Activated T-helper 1 cell treated with anti-CD3 and anti-CD28 coated beads, Interleukin-12 subunit alpha, Interleukin-12 subunit beta, Interleukin-2, Interleukin-4 antibody, amounts not matched to agents 30 ng/mL and 10 ng/mL and 1 ng/mL, durations not matched to agents 14 hours and 24 hours and 36 hours (primary cell): ENCODE measurements at regions of chr18 and their contacts with region 1.

Region 1: DNA sequence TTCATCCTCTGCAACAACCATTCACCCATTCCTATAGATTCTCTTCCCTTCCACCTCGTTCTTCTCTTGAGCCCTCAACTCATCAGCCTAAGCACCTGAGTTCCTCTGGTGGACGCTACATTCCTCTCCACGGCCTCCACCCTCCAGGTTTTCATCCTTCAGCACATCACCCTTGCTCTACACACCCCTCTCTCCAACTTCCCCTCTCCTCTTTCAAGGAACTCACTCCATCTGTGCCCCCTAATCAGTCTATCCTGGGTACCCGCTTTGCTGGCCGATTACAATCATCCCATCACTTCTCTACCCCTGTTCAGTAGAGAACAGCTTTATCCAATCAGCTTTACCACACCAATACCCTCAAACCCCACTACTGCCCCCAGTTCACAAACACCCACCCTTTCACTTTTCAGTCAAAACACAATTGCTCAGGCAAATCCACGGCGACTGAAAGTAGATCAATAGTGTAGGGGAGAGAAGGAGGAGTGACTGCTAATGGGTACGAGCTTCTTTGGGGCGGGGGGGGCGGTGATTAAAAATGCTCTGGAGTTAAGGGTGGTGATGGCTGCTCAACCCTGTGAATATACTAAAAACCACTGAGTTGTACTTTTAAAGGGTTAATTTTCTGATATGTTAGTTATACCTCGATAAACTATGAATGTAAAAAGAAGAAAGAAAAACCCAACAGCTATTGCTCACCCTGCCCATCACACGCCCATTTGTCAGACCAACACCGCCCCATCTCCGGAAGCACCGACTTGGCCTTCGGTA is 857 bp downstream of the DYM start:
- DNase-seq: no peak
- H3K4me3 Mint-ChIP-seq: peak overlapping the region; percentile 87
- H3K27ac Mint-ChIP-seq: peak overlapping the region; percentile 74
- H3K4me1 Mint-ChIP-seq: peaks cover 37% of the 10 kb centered on the region
- H3K27me3 Mint-ChIP-seq: peaks cover 5% of the 10 kb centered on the region

Region 2: DNA sequence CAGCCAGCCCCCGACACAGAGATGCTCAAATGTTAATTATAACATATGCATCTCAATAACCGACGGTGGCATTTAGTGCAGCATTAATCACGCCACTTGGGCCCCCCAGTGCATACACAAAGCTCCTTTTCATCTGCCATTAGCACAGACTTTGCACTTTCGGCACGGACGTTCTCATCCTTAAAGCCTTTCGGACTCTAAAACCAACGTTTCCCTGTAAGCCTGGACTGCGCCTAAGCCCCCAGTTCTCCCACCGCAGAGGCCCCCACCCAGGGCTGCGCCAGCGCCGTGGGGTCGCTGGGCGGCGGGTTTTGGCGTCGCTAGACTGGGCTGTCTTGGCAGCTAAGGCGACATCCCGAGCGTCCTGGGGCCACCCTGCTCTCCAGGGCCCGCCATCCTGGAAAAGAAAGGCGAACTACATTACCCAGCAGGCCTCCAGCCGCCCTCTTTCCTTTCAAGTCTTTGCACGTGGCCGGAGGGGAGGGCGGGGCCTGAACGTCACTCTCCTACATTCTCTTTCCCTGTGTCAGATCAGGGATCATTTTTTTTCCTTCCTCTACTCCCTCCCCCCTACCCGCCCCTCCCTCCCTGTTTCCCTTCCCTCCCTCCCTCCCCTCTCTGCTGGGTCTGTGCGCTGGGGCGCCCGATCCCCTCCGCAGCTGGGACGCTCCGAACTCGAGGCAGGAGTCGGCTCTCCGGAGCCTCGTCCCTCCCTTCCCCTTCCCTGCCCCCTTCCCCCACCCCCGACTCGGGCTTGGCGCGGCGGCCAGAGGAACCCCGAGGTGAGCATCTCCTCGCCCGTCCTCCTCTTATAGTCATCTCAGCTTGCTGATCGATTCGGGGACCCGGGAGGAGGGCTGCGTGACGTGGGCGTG is 920.8 kb before region 1 on chr18 and contains the start of gene CTIF:
- intact Hi-C with region 1: loop called (anchors 2 kb)
- DNase-seq: peak; percentile 60
- H3K4me3 Mint-ChIP-seq: peak within 1 kb of the TSS; percentile 90
- H3K27ac Mint-ChIP-seq: peak within 1 kb of the TSS; percentile 58
- H3K4me1 Mint-ChIP-seq: peaks cover 14% of the 10 kb centered on the region
- H3K27me3 Mint-ChIP-seq: peaks cover 30% of the 10 kb centered on the region
- total RNA-seq, gene CTIF: 7.2 and 8.5 TPM in 2 replicates

Region 3: GRCh38 chr18:48834413-48835031 is 625.1 kb before region 1 on chr18:
- intact Hi-C with region 1: loop called (anchors 1 kb)
- DNase-seq: peak; percentile 68
- H3K4me3 Mint-ChIP-seq: peak overlapping the region; percentile 86
- H3K27ac Mint-ChIP-seq: peak overlapping the region; percentile 99
- H3K4me1 Mint-ChIP-seq: peaks cover 77% of the 10 kb centered on the region
- H3K27me3 Mint-ChIP-seq: peaks cover 2% of the 10 kb centered on the region

Region 4: GRCh38 chr18:49476664-49477411 is 17.2 kb after region 1 on chr18:
- intact Hi-C with region 1: loop called (anchors 2 kb)
- DNase-seq: no peak
- H3K4me3 Mint-ChIP-seq: no peak overlapping the region
- H3K27ac Mint-ChIP-seq: peak overlapping the region; percentile 48
- H3K4me1 Mint-ChIP-seq: peaks cover 17% of the 10 kb centered on the region
- H3K27me3 Mint-ChIP-seq: peaks cover 5% of the 10 kb centered on the region

Region 5: GRCh38 chr18:49486953-49487710 is 27.5 kb after region 1 on chr18 and contains the start of gene C18orf32:
- intact Hi-C with region 1: loop called (anchors 1 kb)
- DNase-seq: peak; percentile 92
- H3K4me3 Mint-ChIP-seq: peak within 1 kb of the TSS; percentile 93
- H3K27ac Mint-ChIP-seq: peak within 1 kb of the TSS; percentile 98
- H3K4me1 Mint-ChIP-seq: peaks cover 53% of the 10 kb centered on the region
- H3K27me3 Mint-ChIP-seq: no peaks in the 10 kb centered on the region
- total RNA-seq, gene C18orf32: 28.7 and 31.2 TPM in 2 replicates

Region 6: DNA sequence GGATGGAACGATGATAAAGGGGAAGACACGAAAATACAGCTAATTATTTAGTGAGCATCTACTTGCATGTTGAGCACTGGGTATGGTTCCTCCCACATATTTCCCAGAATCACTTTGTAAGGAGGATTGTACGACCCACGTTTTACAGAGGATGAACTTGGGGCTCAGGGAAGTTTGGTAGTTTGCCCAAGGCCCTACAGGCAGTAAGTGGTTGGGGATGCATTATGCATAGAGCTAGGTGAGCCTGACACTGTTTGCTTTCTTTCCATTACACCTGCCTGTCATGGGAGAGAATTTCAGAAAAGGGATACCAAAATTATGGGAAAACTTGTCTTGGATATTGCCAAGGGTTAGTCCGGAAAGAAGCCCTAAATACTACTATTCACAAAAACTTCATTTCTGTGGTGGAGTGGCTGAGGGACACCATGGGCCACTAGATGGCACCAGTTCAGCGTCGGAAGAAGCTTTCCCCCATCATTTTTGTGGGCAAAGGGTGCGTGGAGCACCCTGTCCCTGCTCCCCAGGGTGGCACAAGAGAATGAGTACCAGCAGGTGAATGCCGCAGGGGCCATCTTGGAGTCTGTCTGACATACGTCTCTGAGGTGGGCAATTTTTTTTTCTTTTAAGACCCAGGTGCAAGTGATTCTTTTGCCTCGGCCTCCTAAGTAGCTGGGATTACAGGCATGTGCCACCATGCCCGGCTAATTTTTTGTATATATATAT is 51.0 kb after region 1 on chr18:
- intact Hi-C with region 1: no loop called
- DNase-seq: peak; percentile 24
- H3K4me3 Mint-ChIP-seq: no peak overlapping the region
- H3K27ac Mint-ChIP-seq: no peak overlapping the region
- H3K4me1 Mint-ChIP-seq: peaks cover 5% of the 10 kb centered on the region
- H3K27me3 Mint-ChIP-seq: peaks cover 17% of the 10 kb centered on the region

Region 7: DNA sequence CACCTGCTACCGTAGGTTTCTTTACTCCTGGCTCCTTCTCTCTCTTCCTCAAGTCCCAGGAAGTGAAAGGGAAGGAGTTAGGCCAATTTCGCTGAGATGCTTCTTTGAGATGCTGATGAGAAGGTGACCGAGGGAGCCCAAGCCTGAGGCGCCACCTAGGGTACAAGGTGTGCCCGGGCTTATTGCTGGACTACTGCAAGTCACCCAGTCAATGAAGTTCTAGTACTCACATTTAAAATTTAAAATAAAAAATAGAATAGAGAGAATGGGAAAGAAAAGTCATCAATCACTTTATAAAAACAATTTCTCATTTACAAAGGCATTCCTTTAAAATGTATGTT is 308.4 kb after region 1 on chr18:
- intact Hi-C with region 1: no loop called
- DNase-seq: no peak
- H3K4me3 Mint-ChIP-seq: no peak overlapping the region
- H3K27ac Mint-ChIP-seq: no peak overlapping the region
- H3K4me1 Mint-ChIP-seq: no peaks in the 10 kb centered on the region
- H3K27me3 Mint-ChIP-seq: peaks cover 1% of the 10 kb centered on the region

Region 8: GRCh38 chr18:50374753-50375391 is 915.3 kb after region 1 on chr18 and contains the start of gene SKA1:
- intact Hi-C with region 1: loop called (anchors 1 kb)
- DNase-seq: peak; percentile 89
- H3K4me3 Mint-ChIP-seq: peak within 1 kb of the TSS; percentile 91
- H3K27ac Mint-ChIP-seq: peak within 1 kb of the TSS; percentile 81
- H3K4me1 Mint-ChIP-seq: peaks cover 23% of the 10 kb centered on the region
- H3K27me3 Mint-ChIP-seq: peaks cover 2% of the 10 kb centered on the region
- total RNA-seq, gene SKA1: 20.7 and 23.3 TPM in 2 replicates